Common myeloid progenitor, CD34-positive (primary cell): ENCODE measurements at regions of chr3 and their contacts with region 1.

Region 1: DNA sequence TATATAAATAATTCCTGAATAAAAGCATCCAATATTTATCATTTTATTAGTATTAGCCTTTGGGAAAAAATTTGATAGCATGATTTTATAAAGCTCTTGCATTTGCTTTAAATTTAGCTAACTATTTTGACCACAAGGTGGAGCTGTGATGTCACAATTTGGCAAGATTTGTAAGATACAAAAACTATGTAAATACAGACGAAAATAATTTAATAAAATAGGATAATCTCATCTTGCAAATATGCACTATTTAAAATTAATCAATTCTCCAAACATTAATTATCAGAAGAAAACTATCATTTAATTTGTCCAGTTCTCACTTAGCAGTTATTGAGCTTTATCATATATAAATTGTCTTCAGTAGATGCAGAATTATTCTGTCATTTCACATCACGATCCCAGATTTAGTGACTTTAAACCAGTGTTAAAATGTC is 95.4 kb downstream of the PLOD2 start:
- DNase-seq: peak; percentile 70 to 86 (median 77)
- H3K4me3 ChIP-seq: no peak overlapping the region
- H3K27ac ChIP-seq: no peak overlapping the region
- H3K4me1 ChIP-seq: no peaks in the 10 kb centered on the region
- H3K27me3 ChIP-seq: no peaks in the 10 kb centered on the region

Region 2: GRCh38 chr3:146184616-146185015 is 119.0 kb after region 1 on chr3:
- CTCF ChIA-PET with region 1: interaction called, 80 read pairs
- POLR2A ChIA-PET with region 1: no interaction called
- DNase-seq: no peak
- H3K4me3 ChIP-seq: no peak overlapping the region
- H3K27ac ChIP-seq: no peak overlapping the region
- H3K4me1 ChIP-seq: no peaks in the 10 kb centered on the region
- H3K27me3 ChIP-seq: no peaks in the 10 kb centered on the region

Region 3: DNA sequence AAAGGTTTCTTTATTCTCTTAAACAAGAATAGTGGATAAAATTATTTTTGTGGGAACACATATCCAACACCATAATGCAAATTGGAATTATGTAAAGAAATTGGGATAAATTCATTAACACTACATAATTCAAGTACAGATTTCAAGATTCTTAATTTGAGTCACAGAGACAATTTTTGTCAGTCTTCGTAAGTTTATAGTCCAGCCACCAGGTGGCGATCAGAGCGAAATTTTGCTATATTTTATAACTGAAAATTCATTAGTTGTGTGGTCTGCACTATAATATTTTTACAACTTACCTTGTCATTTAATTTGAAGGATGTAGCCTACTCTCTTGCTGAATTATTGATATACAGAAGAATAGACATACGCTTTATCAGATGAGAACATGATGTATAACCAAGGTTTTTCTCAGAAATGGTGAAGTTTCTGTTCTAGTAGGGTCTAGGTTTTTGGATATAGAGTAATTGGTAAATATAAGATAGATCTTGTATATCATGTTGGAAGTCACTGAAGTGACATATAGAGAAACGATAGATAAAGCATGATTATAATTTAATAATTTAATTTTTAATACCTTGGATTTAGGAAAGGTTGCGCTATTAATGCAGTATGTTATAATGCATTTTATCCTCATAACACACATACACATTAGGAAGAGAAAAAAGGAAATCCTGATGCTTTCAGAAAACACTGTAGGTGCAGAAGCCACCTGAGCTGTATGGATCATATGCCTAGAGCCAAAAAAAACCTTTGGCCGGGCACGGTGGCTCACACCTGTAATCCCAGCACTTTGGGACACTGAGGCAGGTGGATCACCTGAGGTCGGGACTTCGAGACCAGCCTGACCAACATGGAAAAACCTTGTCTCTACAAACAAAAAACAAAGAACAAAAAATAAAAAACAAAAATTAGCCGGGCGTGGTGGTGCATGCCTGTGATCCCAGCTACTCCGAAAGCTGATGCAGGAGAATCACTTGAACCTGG is 153.6 kb after region 1 on chr3:
- CTCF ChIA-PET with region 1: no interaction called
- POLR2A ChIA-PET with region 1: no interaction called
- DNase-seq: peak; percentile 41 to 71 (median 54)
- H3K4me3 ChIP-seq: no peak overlapping the region
- H3K27ac ChIP-seq: no peak overlapping the region
- H3K4me1 ChIP-seq: no peaks in the 10 kb centered on the region
- H3K27me3 ChIP-seq: no peaks in the 10 kb centered on the region